CD8-positive, alpha-beta T cell (primary cell): ENCODE measurements at regions of chr1 and their contacts with region 1.

Region 1: GRCh38 chr1:11248155-11248554 is 14.2 kb downstream of the MTOR start:
- DNase-seq: no peak
- ATAC-seq: no peak
- H3K4me3 ChIP-seq: no peak overlapping the region
- H3K4me3 Mint-ChIP-seq: no peak overlapping the region
- H3K27ac ChIP-seq: no peak overlapping the region
- H3K27ac Mint-ChIP-seq: peak overlapping the region; percentile 45
- H3K4me1 ChIP-seq: no peaks in the 10 kb centered on the region
- H3K4me1 Mint-ChIP-seq: peaks cover 12% of the 10 kb centered on the region
- H3K27me3 ChIP-seq: no peaks in the 10 kb centered on the region
- H3K27me3 Mint-ChIP-seq: no peaks in the 10 kb centered on the region
- CTCF ChIP-seq: no peak

Region 2: DNA sequence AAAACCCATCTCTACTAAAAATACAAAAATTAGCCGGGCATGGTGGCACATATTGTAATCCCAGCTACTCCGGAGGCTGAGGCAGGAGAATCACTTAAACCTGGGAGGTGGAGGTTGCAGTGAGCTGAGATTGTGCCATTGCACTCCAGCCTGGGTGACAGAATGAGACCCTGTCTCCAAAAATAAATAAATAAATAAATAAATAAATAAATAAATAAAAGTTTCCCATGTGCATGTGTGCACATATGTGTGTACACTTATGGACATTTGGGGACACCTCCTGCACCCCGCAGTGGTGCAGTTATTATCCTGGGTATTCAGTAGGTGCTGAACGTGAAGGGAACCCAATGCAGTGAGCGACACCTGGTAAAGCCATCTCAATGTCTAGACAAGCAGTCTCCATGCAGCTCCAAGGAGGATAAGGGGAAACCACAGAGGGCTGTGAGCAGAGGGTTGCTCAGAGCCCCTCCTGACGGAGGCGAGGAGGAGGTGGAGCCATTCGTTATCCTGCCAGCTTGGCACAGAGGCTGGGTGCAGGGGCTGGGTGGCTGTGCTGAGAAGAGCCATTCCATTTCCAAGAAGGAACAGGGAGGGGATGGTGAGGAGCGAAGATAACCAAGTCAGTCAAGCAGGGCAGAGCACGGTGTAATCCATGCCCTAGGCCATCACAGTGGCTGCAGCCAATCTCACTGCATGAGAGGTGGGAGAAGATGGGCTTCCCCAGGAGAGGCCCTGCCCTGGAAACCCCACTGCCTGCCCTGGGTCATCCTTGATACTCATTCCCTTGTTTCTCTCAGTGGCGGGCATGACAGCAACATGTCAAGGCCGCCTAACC is 50.5 kb after region 1 on chr1:
- CTCF ChIA-PET with region 1: interaction called, 35 read pairs
- POLR2A ChIA-PET with region 1: no interaction called
- intact Hi-C with region 1: loop called in 1 of 2 experiments (anchors 5 kb)
- DNase-seq: no peak
- ATAC-seq: no peak
- H3K4me3 ChIP-seq: no peak overlapping the region
- H3K4me3 Mint-ChIP-seq: no peak overlapping the region
- H3K27ac ChIP-seq: no peak overlapping the region
- H3K27ac Mint-ChIP-seq: no peak overlapping the region
- H3K4me1 ChIP-seq: peaks cover 16% of the 10 kb centered on the region
- H3K4me1 Mint-ChIP-seq: peaks cover 17% of the 10 kb centered on the region
- H3K27me3 ChIP-seq: no peaks in the 10 kb centered on the region
- H3K27me3 Mint-ChIP-seq: no peaks in the 10 kb centered on the region
- CTCF ChIP-seq: no peak